ENCODE measurements at regions of chr4 and their contacts with region 1.

Region 1: DNA sequence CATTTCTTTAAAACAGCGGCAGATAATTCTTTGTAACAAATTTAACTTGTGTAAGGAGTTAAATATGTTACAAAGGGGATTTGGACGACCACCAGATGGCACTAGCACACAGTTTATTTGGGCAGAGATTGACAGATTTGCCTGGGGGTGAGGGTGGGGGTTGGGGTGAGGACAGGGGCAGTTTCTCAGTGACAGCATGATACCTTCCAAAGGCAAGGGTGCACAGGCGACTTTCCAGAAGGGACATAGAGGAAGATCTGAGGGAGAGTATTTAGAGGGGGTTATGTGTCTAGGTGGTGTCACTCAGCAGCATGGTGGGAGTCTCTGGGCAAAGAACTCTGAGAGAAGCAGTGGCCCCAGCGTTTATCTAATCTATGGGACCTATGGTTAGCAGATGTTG is 9.6 kb upstream of the TMA16 start:
- DNase-seq: no peak
- H3K4me3 ChIP-seq: no peak overlapping the region
- CTCF ChIP-seq: peak; percentile 42

Region 2: DNA sequence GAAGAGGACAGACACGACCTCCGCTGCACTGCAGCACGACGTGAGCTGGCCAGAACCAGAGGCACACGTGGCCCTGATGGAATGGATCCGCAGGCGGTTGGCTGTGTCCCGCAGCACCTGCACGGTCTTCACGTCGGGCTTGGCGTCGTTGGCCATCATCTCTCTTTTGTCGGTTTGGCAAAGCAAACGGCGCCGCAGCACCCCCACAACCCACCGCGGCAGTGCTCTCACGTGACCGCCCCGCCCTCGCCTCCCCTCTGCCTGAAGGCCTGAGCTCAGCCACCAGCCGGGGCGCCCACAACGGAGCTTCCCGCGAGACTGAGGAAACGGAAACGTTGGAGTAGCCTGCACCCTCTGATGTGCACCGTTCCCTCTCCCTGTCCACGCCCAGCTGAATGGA is 11.3 kb before region 1 on chr4 and contains the start of gene TKTL2:
- CTCF ChIA-PET with region 1: interaction called, 10 read pairs
- POLR2A ChIA-PET with region 1: no interaction called
- DNase-seq: no peak
- H3K4me3 ChIP-seq: no peak within 1 kb of the TSS
- CTCF ChIP-seq: no peak

Region 3: DNA sequence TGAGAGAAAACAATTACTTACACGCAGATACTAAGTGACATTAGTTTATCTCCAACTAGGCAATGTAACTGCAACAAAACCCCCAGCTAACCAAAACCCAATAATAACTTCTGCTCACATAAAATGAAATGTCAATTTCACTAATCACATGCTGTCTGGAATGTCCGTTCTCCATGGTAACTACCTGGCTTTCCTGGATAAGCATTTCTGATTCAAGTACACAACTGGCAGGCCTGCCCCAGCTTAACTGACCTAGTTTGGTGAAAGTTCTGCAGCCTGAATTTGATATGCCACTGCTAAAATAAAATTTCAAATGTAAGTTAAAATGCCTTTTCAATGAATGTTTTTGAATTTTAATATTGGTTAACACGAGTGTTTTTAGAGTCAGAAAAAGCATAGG is 323.2 kb after region 1 on chr4:
- CTCF ChIA-PET with region 1: no interaction called
- POLR2A ChIA-PET with region 1: no interaction called
- DNase-seq: no peak
- H3K4me3 ChIP-seq: no peak overlapping the region
- CTCF ChIP-seq: no peak

Region 4: GRCh38 chr4:164731827-164732474 is 1247.0 kb after region 1 on chr4:
- CTCF ChIA-PET with region 1: interaction called, 10 read pairs
- POLR2A ChIA-PET with region 1: no interaction called
- DNase-seq: no peak
- H3K4me3 ChIP-seq: no peak overlapping the region
- CTCF ChIP-seq: peak; percentile 71